A673 (cell line): ENCODE measurements at regions of chr10 and their contacts with region 1.

Region 1: GRCh38 chr10:59906417-59907202 is at the start of gene CCDC6:
- DNase-seq: peak; percentile 96
- H3K4me3 ChIP-seq: peak within 1 kb of the TSS; percentile 97
- H3K27ac ChIP-seq: peak within 1 kb of the TSS; percentile 85
- H3K4me1 ChIP-seq: peaks cover 17% of the 10 kb centered on the region
- H3K27me3 ChIP-seq: no peaks in the 10 kb centered on the region
- CTCF ChIP-seq: peak; percentile 76
- total RNA-seq, gene CCDC6: 28.1 and 28.8 TPM in 2 replicates

Region 2: GRCh38 chr10:60186315-60187071 is 279.9 kb after region 1 on chr10:
- CTCF ChIA-PET with region 1: no interaction called
- POLR2A ChIA-PET with region 1: interaction called, 14 read pairs
- intact Hi-C with region 1: no loop called
- DNase-seq: no peak
- H3K4me3 ChIP-seq: no peak overlapping the region
- H3K27ac ChIP-seq: no peak overlapping the region
- H3K4me1 ChIP-seq: no peaks in the 10 kb centered on the region
- H3K27me3 ChIP-seq: no peaks in the 10 kb centered on the region
- CTCF ChIP-seq: no peak

Region 3: GRCh38 chr10:60742512-60742911 is 835.9 kb after region 1 on chr10:
- CTCF ChIA-PET with region 1: no interaction called
- POLR2A ChIA-PET with region 1: interaction called, 15 read pairs
- intact Hi-C with region 1: no loop called
- DNase-seq: no peak
- H3K4me3 ChIP-seq: no peak overlapping the region
- H3K27ac ChIP-seq: no peak overlapping the region
- H3K4me1 ChIP-seq: no peaks in the 10 kb centered on the region
- H3K27me3 ChIP-seq: no peaks in the 10 kb centered on the region
- CTCF ChIP-seq: no peak